Activated naive CD4-positive, alpha-beta T cell treated with anti-CD3 and anti-CD28 coated beads for 36 hours (primary cell): ENCODE measurements at regions of chr15 and their contacts with region 1.

Region 1: GRCh38 chr15:80989518-80990478 is at the start of gene MESD:
- DNase-seq: peak; percentile 99
- H3K4me3 Mint-ChIP-seq: peak within 1 kb of the TSS; percentile 99
- H3K27ac Mint-ChIP-seq: peak within 1 kb of the TSS; percentile 97
- H3K4me1 Mint-ChIP-seq: peaks cover 57% of the 10 kb centered on the region
- H3K27me3 Mint-ChIP-seq: no peaks in the 10 kb centered on the region
- total RNA-seq, gene MESD: 12.5 to 15.1 TPM

Region 2: GRCh38 chr15:80695104-80695910 is 294.5 kb before region 1 on chr15 and contains the start of gene ABHD17C:
- CTCF ChIA-PET with region 1: no interaction called
- intact Hi-C with region 1: loop called (anchors 5 kb)
- DNase-seq: peak; percentile 45
- H3K4me3 Mint-ChIP-seq: peak within 1 kb of the TSS; percentile 93
- H3K27ac Mint-ChIP-seq: peak within 1 kb of the TSS; percentile 12
- H3K4me1 Mint-ChIP-seq: peaks cover 15% of the 10 kb centered on the region
- H3K27me3 Mint-ChIP-seq: peaks cover 3% of the 10 kb centered on the region
- total RNA-seq, gene ABHD17C: 6.5 to 7.3 TPM

Region 3: DNA sequence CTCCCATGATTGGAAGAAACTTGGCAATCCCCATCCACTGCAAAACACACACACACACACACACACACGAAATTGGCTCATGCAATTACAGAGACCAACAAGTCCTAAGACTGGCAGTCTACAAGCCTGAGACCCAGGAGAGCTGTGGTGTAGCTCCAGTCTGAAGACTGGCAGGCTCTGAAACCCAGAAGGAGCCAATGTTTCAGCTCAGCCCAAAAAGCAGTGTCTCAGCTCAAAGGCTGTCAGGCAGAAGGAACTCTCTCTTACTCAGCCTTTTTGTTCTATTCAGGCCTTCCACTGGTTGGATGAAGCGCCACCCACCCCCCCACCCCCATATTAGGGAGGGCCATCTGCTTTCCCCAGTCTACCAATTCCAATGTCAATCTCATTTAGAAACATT is 32.2 kb before region 1 on chr15:
- CTCF ChIA-PET with region 1: no interaction called
- intact Hi-C with region 1: loop called (anchors 2 kb)
- DNase-seq: no peak
- H3K4me3 Mint-ChIP-seq: no peak overlapping the region
- H3K27ac Mint-ChIP-seq: no peak overlapping the region
- H3K4me1 Mint-ChIP-seq: peaks cover 17% of the 10 kb centered on the region
- H3K27me3 Mint-ChIP-seq: no peaks in the 10 kb centered on the region

Region 4: GRCh38 chr15:80977627-80978036 is 12.2 kb before region 1 on chr15:
- CTCF ChIA-PET with region 1: interaction called, 6 read pairs
- intact Hi-C with region 1: loop called (anchors 2 kb)
- DNase-seq: peak; percentile 69
- H3K4me3 Mint-ChIP-seq: no peak overlapping the region
- H3K27ac Mint-ChIP-seq: peak overlapping the region; percentile 57
- H3K4me1 Mint-ChIP-seq: peaks cover 54% of the 10 kb centered on the region
- H3K27me3 Mint-ChIP-seq: no peaks in the 10 kb centered on the region